H1 (cell line): ENCODE measurements at regions of chrX and their contacts with region 1.

Region 1: GRCh38 chrX:100512471-100512870 is 72.3 kb upstream of the TNMD start:
- DNase-seq: no peak
- H3K4me3 ChIP-seq: no peak overlapping the region
- H3K27ac ChIP-seq: no peak overlapping the region
- H3K4me1 ChIP-seq: no peaks in the 10 kb centered on the region
- H3K27me3 ChIP-seq: no peaks in the 10 kb centered on the region
- CTCF ChIP-seq: peak in 2 of 3 experiments; percentile 26 to 32; a peak in 2 of 4 replicates
- EP300 ChIP-seq: no peak
- POLR2A ChIP-seq: no peak
- RAD21 ChIP-seq: peak; percentile 46 to 52

Region 2: DNA sequence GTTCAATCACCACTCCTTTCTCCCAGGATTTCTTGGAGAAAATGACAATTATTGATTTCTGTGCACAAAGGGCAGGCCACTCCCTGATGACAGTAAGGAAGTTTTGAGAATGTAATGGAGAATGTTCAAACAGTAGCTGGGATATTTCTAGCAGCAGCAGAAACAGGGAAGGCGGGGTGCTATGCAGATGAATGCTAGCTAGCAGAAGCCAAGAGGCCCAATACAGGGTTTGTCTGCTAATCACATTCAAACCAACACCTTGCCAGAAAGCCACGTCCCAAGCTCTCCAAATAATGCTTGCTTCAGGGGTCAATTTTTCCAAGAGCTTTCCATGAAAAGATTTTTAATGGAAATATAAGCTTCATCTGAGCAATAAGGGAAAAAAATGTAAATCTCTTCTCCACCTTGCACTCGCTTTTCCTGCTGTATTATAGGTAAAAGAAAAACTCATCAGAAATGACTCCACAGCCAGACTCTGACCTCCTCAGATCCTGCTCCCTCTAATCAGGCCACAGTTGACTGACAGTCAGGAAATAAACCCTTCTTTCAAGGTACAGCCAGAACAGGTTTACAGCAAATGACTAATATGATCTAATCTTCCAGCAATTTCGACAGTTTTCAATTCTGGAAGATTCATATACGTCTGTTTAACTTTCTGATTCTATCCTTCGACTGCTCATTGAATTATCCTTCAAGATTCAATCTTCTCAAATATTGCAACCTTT is 17.7 kb before region 1 on chrX:
- CTCF ChIA-PET with region 1: interaction called, 18 read pairs
- POLR2A ChIA-PET with region 1: no interaction called
- DNase-seq: no peak
- H3K4me3 ChIP-seq: no peak overlapping the region
- H3K27ac ChIP-seq: no peak overlapping the region
- H3K4me1 ChIP-seq: 0 out of 7 replicates have a peak, but pooled peaks cover 0 to 5% (median 0%) of the 10 kb centered on the region in 4 experiments
- H3K27me3 ChIP-seq: no peaks in the 10 kb centered on the region
- CTCF ChIP-seq: no peak
- EP300 ChIP-seq: no peak
- POLR2A ChIP-seq: no peak
- RAD21 ChIP-seq: no peak

Region 3: DNA sequence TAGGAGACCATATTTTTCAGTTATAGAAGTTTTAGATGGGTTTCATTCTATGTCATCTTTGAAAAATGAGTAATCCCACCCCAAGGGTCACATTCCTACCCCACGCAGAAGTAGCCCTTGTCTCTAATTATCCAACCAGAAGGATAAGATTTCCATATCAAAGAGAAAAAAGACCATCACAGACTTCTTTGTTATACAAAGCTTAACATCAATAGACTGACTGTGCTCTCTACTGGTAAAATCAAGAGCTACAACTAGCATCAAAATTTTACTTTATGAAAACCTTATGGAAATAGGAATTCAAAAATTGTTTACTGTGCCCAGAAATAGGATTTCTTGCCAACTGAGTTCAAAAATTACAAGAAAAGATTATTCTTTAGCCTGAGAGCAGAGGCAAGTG is 97.1 kb after region 1 on chrX:
- CTCF ChIA-PET with region 1: interaction called, 10 read pairs
- POLR2A ChIA-PET with region 1: no interaction called
- DNase-seq: no peak
- H3K4me3 ChIP-seq: peak overlapping the region in 1 of 4 experiments; percentile 19; a peak in 1 of 8 replicates
- H3K27ac ChIP-seq: no peak overlapping the region
- H3K4me1 ChIP-seq: peaks cover 0 to 5% (median 0%) of the 10 kb centered on the region in 4 experiments; a peak in 1 of 7 replicates
- H3K27me3 ChIP-seq: no peaks in the 10 kb centered on the region
- CTCF ChIP-seq: no peak
- EP300 ChIP-seq: no peak
- POLR2A ChIP-seq: no peak
- RAD21 ChIP-seq: peak in 1 of 2 experiments; percentile 28; a peak in 3 of 4 replicates

Region 4: GRCh38 chrX:100946299-100946920 is 433.9 kb after region 1 on chrX:
- CTCF ChIA-PET with region 1: no interaction called
- POLR2A ChIA-PET with region 1: no interaction called
- DNase-seq: no peak
- H3K4me3 ChIP-seq: no peak overlapping the region
- H3K27ac ChIP-seq: no peak overlapping the region
- H3K4me1 ChIP-seq: no peaks in the 10 kb centered on the region
- H3K27me3 ChIP-seq: no peaks in the 10 kb centered on the region
- CTCF ChIP-seq: no peak
- EP300 ChIP-seq: no peak
- POLR2A ChIP-seq: no peak
- RAD21 ChIP-seq: no peak